Tibial artery (tissue), 4 donors: ENCODE measurements at regions of chr1 and their contacts with region 1.

Region 1: GRCh38 chr1:87718241-87718950 is 389.7 kb downstream of the LMO4 start:
- DNase-seq: no peak
- H3K4me3 ChIP-seq: no peak overlapping the region
- H3K27ac ChIP-seq: no peak overlapping the region
- H3K4me1 ChIP-seq: no peaks in the 10 kb centered on the region
- H3K27me3 ChIP-seq: no peaks in the 10 kb centered on the region
- CTCF ChIP-seq: no peak

Region 2: GRCh38 chr1:87612956-87613355 is 105.4 kb before region 1 on chr1:
- intact Hi-C with region 1: no loop called
- DNase-seq: no peak
- H3K4me3 ChIP-seq: no peak overlapping the region
- H3K27ac ChIP-seq: peak overlapping the region; percentile 54 to 76
- H3K4me1 ChIP-seq: peaks cover 0 to 41% (median 16%) of the 10 kb centered on the region in 4 donors
- H3K27me3 ChIP-seq: no peaks in the 10 kb centered on the region
- CTCF ChIP-seq: no peak

Region 3: DNA sequence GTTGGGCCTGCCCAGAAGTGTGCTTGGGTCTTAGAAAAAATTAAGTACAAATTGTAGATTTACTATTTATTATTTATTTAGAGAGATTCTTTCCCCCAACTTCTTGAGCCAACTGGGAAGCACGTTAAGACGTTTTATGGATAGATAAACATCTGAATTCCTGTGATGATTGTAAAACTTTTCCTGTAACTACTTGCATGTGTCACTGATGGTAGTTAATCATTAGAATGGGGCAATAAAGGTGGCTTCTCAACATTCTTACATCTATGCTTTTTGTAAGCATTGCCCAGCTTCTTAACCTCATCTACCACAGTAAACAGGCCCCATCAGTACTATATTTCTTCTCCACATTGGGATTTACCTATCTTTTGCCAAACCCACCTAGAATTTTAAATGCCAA is 170.1 kb after region 1 on chr1:
- intact Hi-C with region 1: no loop called
- DNase-seq: no peak
- H3K4me3 ChIP-seq: no peak overlapping the region
- H3K27ac ChIP-seq: no peak overlapping the region
- H3K4me1 ChIP-seq: peaks cover 0 to 11% (median 0%) of the 10 kb centered on the region in 4 donors
- H3K27me3 ChIP-seq: no peaks in the 10 kb centered on the region
- CTCF ChIP-seq: no peak

Region 4: GRCh38 chr1:88608139-88608943 is 889.9 kb after region 1 on chr1:
- intact Hi-C with region 1: loop called (anchors 5 kb)
- DNase-seq: no peak
- H3K4me3 ChIP-seq: no peak overlapping the region
- H3K27ac ChIP-seq: no peak overlapping the region
- H3K4me1 ChIP-seq: no peaks in the 10 kb centered on the region
- H3K27me3 ChIP-seq: no peaks in the 10 kb centered on the region
- CTCF ChIP-seq: peak in 1 of 2 experiments; percentile 6